Activated CD8-positive, alpha-beta T cell treated with anti-CD3 and anti-CD28 coated beads for 36 hours (primary cell): ENCODE measurements at regions of chr1 and their contacts with region 1.

Region 1: GRCh38 chr1:165597883-165598675 is 33.0 kb upstream of the MGST3 start:
- DNase-seq: peak; percentile 99
- ATAC-seq: peak; percentile 98
- H3K4me3 Mint-ChIP-seq: peak overlapping the region; percentile 81
- H3K27ac Mint-ChIP-seq: peak overlapping the region; percentile 87
- H3K4me1 Mint-ChIP-seq: peaks cover 26% of the 10 kb centered on the region
- H3K27me3 Mint-ChIP-seq: peaks cover 29% of the 10 kb centered on the region
- CTCF ChIP-seq: no peak

Region 2: DNA sequence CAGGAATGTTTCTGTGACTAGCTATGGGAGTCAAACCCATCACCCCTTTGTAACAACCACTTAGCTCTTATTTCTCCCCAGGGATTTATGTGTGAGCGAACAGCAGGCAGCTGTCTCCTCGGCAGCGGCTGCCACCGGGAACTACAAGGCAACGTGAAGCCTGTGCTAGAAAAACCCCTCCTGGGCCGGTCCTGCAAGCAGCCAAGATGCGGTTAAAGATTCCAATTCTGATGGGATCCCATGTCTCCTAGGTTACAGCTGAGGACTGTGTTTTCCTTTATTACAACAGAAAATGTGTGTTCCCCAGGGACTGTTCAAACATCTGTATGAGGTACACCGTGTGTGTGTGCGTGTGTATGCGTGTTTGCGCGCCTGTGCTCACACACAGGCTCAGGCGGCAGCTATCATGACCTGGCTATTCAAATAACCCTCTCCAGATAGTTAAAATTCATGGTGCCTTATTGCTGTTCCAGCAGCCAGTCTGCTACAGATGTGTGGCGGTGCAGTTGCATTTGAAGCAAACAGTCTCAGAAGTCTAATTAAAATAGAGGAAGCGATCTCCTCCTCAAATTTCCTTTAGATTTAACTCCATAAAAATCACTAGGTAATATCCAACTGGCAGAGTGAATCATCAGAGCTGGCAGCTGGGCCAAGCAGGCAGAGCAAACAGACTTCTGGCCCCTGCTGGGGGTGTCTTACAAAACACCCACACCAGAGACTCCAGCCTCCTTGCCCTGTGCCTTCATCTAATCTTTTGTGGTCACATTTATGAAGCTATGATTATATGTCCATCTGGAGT is 309.5 kb before region 1 on chr1:
- CTCF ChIA-PET with region 1: no interaction called
- POLR2A ChIA-PET with region 1: no interaction called
- intact Hi-C with region 1: no loop called
- DNase-seq: no peak
- ATAC-seq: no peak
- H3K4me3 Mint-ChIP-seq: no peak overlapping the region
- H3K27ac Mint-ChIP-seq: no peak overlapping the region
- H3K4me1 Mint-ChIP-seq: no peaks in the 10 kb centered on the region
- H3K27me3 Mint-ChIP-seq: peaks cover 5% of the 10 kb centered on the region
- CTCF ChIP-seq: no peak

Region 3: GRCh38 chr1:165367375-165367993 is 230.6 kb before region 1 on chr1:
- CTCF ChIA-PET with region 1: interaction called, 41 read pairs
- POLR2A ChIA-PET with region 1: interaction called, 3 read pairs
- intact Hi-C with region 1: no loop called
- DNase-seq: peak; percentile 88
- ATAC-seq: peak; percentile 74
- H3K4me3 Mint-ChIP-seq: no peak overlapping the region
- H3K27ac Mint-ChIP-seq: no peak overlapping the region
- H3K4me1 Mint-ChIP-seq: no peaks in the 10 kb centered on the region
- H3K27me3 Mint-ChIP-seq: peaks cover 50% of the 10 kb centered on the region
- CTCF ChIP-seq: peak; percentile 92

Region 4: GRCh38 chr1:165397944-165398343 is 200.1 kb before region 1 on chr1:
- CTCF ChIA-PET with region 1: interaction called, 77 read pairs
- POLR2A ChIA-PET with region 1: interaction called, 3 read pairs
- intact Hi-C with region 1: loop called (anchors 1 kb)
- DNase-seq: peak; percentile 31
- ATAC-seq: peak; percentile 74
- H3K4me3 Mint-ChIP-seq: no peak overlapping the region
- H3K27ac Mint-ChIP-seq: no peak overlapping the region
- H3K4me1 Mint-ChIP-seq: peaks cover 6% of the 10 kb centered on the region
- H3K27me3 Mint-ChIP-seq: peaks cover 52% of the 10 kb centered on the region
- CTCF ChIP-seq: no peak

Region 5: DNA sequence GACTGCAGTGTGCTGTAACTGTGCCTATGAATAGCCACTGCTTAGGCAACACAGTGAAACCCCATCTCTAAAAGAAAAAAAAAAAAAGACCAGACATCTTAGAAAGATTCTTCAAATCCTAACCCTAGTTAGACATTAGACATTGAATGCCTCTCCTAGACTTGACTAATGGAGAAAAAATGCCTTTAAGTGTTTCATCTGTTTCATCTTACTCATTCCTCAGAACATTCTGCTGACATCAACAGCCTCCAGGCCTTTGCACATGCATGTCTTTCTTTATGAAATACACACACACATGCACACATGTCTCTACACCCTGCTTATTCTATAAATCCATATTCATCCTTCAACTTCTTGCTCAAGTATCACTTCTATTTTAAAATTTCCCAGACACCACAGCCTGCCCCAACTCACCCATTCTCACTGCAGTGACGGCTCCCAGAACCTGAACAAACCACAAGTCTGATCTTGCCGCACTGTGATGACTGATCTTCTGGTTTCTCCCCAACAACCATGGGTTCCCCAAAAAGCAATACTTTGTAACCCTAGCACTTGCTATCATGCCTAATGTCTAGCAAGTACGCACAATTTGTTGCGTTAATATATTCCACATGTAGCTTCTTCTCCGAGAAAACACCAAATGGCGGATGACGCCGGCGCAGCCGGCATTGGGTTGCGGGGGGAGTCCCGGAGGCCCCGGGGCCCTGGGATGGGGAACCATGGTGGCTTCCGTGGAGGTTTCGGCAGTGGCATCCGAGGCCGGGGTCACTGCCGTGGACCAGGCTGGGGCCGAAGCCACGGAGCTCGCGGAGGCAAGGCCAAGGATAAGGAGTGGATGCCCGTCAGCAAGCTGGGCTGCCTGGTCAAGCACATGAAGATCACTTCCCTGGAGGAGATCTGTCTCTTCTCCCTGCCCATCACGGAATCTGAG is 16.9 kb before region 1 on chr1:
- CTCF ChIA-PET with region 1: interaction called, 14 read pairs
- POLR2A ChIA-PET with region 1: no interaction called
- intact Hi-C with region 1: no loop called
- DNase-seq: no peak
- ATAC-seq: no peak
- H3K4me3 Mint-ChIP-seq: no peak overlapping the region
- H3K27ac Mint-ChIP-seq: no peak overlapping the region
- H3K4me1 Mint-ChIP-seq: no peaks in the 10 kb centered on the region
- H3K27me3 Mint-ChIP-seq: peaks cover 2% of the 10 kb centered on the region
- CTCF ChIP-seq: no peak

Region 6: DNA sequence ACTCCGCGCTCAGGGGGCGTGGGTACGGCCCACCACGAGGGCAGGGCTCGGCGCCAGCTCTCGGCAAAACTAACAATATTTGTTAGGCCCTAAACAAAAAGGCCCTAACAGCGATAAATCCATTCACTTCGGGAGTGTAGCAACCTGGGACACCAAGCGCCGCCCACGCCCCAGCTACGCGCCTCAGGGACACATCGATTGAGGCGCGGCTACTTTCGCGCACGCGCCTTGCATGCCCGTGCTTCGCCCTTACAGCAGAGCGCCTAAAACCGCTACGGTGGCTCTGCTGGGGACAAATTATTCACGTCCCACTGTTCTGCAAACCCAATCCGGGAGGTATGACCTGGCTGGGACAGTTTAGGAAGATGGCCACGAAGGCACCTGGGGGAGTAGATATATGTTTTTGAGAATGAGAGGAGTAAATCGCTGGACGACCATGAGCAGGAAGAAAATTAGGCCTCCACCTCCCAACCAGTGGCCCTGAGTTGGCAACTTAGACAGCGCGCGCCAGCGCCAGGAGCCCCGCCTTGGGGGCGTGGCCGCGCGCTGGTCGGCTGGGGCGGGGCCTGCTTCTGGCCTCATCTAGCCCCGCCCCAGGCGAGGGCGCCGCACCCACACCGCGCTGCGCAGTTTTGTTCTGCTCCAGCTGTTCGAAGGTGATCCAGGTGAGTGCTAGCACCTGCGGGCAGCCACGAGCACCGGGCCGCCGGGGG is 32.7 kb after region 1 on chr1 and contains the start of gene MGST3:
- CTCF ChIA-PET with region 1: interaction called, 12 read pairs
- POLR2A ChIA-PET with region 1: no interaction called
- intact Hi-C with region 1: no loop called
- DNase-seq: peak; percentile 98
- ATAC-seq: peak; percentile 94
- H3K4me3 Mint-ChIP-seq: no peak within 1 kb of the TSS
- H3K27ac Mint-ChIP-seq: no peak within 1 kb of the TSS
- H3K4me1 Mint-ChIP-seq: peaks cover 22% of the 10 kb centered on the region
- H3K27me3 Mint-ChIP-seq: no peaks in the 10 kb centered on the region
- CTCF ChIP-seq: no peak
- total RNA-seq, gene MGST3: 23.8 to 26.1 TPM

Region 7: DNA sequence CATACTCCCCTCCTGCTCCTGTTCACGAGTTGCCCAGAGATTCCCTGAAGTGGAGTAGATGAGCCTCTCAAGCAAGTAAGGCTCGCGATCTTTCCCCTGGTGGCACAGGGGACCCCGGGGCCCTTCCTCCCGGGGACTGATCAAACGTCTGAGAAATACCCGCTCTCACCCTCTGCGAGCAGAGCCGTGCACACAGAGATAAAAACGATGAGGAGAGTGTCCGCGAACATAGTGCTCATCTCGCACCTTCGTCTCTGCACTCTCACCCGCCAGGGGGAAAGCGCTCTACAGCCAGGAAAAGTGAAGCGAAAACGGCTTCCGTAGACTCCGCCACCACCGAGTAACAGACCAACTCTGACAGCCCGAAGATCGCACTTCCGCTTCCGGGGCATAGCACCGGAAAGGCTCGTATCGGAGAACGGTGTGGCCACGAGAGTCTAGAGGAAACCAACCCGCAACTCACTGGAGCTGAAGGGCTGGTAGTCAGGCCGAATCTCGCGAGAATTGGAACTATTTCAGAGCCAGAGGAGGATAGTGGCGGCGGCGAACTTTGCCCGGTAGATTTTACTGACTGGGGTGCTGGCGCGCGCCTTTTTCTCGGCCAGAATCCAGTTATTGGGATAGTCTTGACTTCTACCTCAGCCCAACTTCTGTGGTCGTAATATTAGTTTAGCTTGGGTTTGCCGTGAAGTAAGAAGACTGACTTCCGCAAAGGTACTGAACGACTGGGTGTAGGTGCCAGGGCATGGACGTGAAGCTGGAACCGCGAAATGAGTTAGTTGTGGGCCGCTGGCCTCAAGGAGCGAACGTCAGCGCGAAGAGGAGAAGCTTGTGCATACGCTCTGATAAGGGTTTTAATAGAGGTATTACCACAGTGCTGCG is 170.7 kb after region 1 on chr1 and contains the start of gene TMCO1:
- CTCF ChIA-PET with region 1: interaction called, 21 read pairs
- POLR2A ChIA-PET with region 1: interaction called, 3 read pairs
- intact Hi-C with region 1: no loop called
- DNase-seq: peak; percentile 97
- ATAC-seq: peak; percentile 99
- H3K4me3 Mint-ChIP-seq: peak within 1 kb of the TSS; percentile 100
- H3K27ac Mint-ChIP-seq: peak within 1 kb of the TSS; percentile 99
- H3K4me1 Mint-ChIP-seq: peaks cover 56% of the 10 kb centered on the region
- H3K27me3 Mint-ChIP-seq: no peaks in the 10 kb centered on the region
- CTCF ChIP-seq: no peak
- total RNA-seq, gene TMCO1: 57.9 to 60.8 TPM